ENCODE measurements at regions of chr20 and their contacts with region 1.

Region 1: DNA sequence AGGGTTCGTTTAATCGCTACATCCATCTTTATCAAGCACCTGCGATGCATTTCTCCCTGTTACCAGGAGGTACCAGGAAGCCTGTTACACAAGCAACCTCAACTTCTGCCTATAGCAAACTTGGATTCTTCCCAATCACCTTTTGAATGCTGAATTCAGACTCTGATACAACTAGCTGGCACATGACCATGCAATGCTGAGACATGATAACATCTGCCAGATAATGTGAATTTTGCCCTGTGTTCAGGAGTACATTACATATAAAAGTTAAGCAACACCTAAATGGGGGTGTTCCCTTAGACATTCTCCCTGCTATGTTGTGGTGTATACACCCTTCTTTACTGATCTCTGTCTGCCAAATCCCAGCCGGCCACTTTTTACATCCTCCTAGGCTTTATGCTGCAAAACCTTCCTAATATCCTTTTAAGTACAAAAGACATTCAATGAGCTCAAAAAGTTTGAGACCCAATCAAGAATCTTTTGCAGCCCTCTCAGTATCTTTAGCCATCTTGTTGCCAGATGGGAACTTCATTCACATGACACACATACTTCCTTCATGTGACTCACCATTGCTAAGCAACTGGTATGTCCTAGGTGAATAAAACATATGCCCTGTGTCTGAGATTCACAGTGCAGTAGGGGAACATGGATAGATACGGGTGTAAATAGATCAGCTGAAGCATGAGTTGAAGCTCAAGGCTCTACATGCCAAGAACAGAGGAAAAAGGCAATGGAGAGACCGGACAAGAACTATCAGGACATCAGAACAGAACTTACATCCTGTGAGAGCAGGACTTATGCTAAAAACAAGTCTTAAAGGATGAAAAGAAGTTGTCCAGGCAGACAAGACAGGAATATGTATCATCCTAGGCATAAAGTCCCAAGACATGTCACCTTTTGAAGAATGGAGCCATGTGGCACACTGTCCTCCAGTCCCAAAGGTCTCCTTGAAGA is 84.3 kb downstream of the ZHX3 start:
- DNase-seq: no peak
- H3K4me3 ChIP-seq: no peak overlapping the region
- H3K27ac ChIP-seq: peak overlapping the region; percentile 21 to 49
- H3K4me1 ChIP-seq: peaks cover 11% of the 10 kb centered on the region
- H3K27me3 ChIP-seq: no peaks in the 10 kb centered on the region
- CTCF ChIP-seq: no peak
- EP300 ChIP-seq: no peak
- POLR2A ChIP-seq: no peak

Region 2: GRCh38 chr20:41173161-41173721 is 60.0 kb before region 1 on chr20:
- intact Hi-C with region 1: loop called (anchors 5 to 10 kb)
- DNase-seq: peak; percentile 86 to 94 (median 91)
- H3K4me3 ChIP-seq: no peak overlapping the region
- H3K27ac ChIP-seq: peak overlapping the region in 1 of 2 donors; percentile 41
- H3K4me1 ChIP-seq: peaks cover 5% of the 10 kb centered on the region
- H3K27me3 ChIP-seq: no peaks in the 10 kb centered on the region
- CTCF ChIP-seq: peak; percentile 91 to 98 (median 96)
- EP300 ChIP-seq: no peak
- POLR2A ChIP-seq: no peak

Region 3: DNA sequence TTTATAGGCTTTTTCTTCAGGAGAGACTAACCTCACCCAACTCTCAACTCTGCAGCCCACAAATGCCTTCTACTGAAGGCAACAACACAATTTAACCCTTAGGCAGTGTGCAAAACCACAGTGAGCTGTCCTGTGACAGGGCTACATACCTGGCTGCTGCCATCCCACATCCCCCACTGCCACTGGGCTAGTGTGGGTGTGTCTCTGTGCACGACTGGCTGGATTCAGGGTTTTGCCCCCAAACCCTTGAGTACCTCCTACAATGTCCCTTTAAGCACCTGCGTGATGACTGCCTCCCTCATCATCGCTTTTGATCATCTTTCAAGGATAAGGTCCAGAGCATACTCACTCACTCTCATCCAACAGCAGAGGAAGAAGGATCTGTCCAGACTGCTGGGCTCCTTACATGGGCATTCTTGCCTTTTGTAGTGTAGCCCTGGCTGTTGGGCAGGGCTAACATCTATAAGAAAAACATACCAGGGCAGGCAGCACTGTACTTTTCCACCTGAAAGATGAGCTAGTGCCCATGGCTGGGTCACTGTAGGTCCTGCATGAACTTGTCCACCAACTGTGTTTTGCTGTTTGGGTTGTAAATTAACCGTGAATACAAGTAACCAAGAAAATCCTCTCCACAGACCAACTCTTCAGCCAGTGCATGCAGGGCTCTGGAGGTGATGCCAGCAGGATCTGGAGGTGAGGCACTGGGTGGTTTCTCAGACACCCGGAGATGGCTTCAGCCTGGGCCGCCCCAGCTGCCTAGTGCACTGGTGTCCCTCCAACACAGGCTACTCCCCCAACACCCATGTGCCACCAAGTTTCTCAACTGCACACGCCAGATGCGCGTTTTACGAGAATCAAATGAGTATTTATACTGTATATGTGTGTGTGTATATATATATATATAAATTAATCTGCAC is 50.7 kb before region 1 on chr20:
- intact Hi-C with region 1: loop called in 1 of 4 experiments (anchors 5 kb)
- DNase-seq: no peak
- H3K4me3 ChIP-seq: no peak overlapping the region
- H3K27ac ChIP-seq: no peak overlapping the region
- H3K4me1 ChIP-seq: peaks cover 2% of the 10 kb centered on the region
- H3K27me3 ChIP-seq: no peaks in the 10 kb centered on the region
- CTCF ChIP-seq: no peak
- EP300 ChIP-seq: no peak
- POLR2A ChIP-seq: no peak

Region 4: DNA sequence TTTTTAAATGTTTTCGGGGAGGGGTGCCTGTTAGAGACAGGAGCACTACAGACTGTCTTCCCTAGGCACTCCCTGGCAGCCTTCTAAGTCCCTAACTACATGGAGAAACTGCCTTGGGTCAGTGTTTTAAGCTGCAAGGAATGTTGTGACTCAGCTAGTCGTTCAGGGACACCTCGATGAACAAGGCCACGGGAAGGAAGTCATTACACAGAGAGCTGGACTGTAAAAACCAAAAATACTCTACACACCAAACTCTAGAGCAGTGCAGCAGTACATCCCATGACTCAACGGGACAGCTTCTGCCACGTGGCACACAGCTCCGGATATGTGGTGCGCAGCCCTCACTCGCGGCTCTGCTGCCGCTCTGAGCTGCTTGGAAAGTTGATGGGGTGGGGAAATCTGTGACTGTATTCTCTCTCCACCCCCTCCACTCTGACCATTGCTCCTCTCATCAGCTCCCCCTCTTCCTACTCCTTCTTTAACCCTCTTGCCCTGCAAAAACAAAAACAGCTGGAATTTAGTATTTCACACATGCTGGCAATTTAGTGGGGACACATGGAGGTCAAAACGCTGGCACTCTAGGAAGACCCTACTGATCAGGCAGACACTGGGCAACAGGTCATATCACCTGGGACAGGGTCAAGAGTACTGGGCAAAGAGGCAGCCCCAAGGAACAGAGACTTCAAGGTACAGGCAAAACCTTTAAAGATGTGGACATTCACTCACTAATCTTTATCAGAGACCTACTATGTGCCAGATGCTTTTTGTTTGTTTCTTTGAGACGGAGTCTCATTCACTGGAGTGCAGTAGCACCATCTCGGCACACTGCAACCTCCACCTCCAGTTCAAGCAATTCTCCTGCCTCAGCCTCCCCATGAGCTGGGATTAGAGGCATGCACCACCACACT is 96.4 kb after region 1 on chr20:
- intact Hi-C with region 1: no loop called
- DNase-seq: peak; percentile 66 to 81 (median 75)
- H3K4me3 ChIP-seq: no peak overlapping the region
- H3K27ac ChIP-seq: peak overlapping the region; percentile 10 to 30
- H3K4me1 ChIP-seq: peaks cover 6% of the 10 kb centered on the region
- H3K27me3 ChIP-seq: no peaks in the 10 kb centered on the region
- CTCF ChIP-seq: no peak
- EP300 ChIP-seq: no peak
- POLR2A ChIP-seq: no peak